ENCODE measurements at regions of chr2 and their contacts with region 1.

Region 1: GRCh38 chr2:63698825-63699548 is 110.2 kb downstream of the MDH1 start:
- DNase-seq: peak in 1 of 2 donors; percentile 66
- ATAC-seq: peak; percentile 90 to 97 (median 94)
- H3K4me3 ChIP-seq: no peak overlapping the region
- H3K27ac ChIP-seq: peak overlapping the region in 7 of 10 donors; percentile 23 to 81 (median 64)
- H3K4me1 ChIP-seq: peaks cover 0 to 17% (median 7%) of the 10 kb centered on the region in 9 donors
- H3K27me3 ChIP-seq: no peaks in the 10 kb centered on the region
- CTCF ChIP-seq: peak; percentile 16 to 72 (median 57)

Region 2: DNA sequence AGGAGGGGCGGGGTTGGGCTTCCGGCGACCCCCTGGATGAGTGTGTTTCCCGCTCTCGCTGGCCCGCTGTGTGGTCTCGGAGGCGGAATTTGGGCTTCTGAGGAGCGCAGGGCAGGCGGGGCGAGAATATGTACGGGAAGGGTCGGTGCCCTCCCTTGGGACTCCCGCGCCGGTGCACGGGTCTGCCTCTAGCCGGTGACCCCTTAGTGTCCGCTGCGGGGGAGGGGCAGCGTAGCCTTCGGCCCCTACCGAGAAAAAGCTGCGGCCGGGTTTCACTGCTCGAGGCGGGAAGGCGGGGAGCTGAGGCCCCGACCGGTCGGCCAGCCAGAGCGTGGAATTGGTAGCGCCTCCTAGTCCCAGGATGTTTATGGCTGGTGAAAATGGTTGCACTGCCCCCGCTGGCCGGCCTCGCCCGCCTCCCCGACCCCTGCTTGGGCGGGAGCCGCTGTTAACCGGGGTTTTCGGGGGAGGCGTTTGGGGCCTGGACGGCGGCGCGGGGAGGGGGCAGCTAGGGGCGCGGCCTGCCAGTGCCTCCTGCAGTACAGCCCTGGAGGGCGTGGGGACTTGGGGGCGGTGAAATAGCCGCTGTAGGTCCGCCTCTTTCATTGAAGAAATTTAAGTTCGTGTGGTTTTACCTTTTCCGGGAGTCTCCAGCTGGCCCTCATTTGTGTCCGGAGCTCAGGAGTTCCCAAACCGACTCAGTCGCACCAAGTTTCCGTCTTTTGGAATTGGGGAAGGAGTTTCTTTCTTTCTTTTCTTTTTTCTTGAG is 142.5 kb after region 1 on chr2 and contains the start of gene UGP2:
- intact Hi-C with region 1: loop called in 2 of 10 experiments (anchors 1 to 5 kb)
- DNase-seq: peak; percentile 90 to 91
- ATAC-seq: peak; percentile 86 to 94 (median 91)
- H3K4me3 ChIP-seq: peak within 1 kb of the TSS; percentile 75 to 97 (median 88)
- H3K27ac ChIP-seq: peak within 1 kb of the TSS; percentile 93 to 100 (median 98)
- H3K4me1 ChIP-seq: peaks cover 4 to 52% (median 35%) of the 10 kb centered on the region in 9 donors
- H3K27me3 ChIP-seq: no peaks in the 10 kb centered on the region
- CTCF ChIP-seq: peak in 7 of 9 donors; percentile 12 to 59 (median 21)
- total RNA-seq, gene UGP2: 250 to 457 (median 371) TPM

Region 3: DNA sequence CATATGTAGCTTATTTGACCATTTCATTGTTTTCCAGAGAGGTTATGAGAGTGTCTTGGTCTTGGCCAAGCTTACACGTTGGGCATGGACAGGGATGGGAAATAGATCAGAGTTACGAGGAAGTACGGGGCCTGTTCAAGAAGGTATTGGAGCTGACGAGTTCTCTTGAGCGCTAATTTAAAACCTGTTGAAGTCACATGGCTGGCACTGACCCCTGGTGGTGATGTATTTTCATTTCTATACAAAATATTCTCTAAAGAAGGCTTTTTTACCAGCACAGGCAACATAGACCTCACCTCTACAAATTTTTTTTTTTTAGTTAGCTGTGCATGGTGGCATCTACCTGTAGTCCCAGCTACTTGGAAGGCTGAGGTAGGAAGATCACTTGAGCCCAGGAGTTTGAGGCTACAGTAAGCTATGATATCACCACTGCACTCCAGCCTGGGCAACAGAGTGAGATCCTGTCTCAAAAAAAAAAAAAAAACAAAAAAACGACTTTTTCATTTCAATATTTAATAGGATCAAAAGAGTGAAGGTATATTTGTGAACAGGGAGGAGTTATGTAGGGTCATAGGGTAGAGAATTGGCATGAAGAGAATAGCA is 162.3 kb after region 1 on chr2:
- intact Hi-C with region 1: loop called in 4 of 10 experiments (anchors 5 kb)
- DNase-seq: peak in 1 of 2 donors; percentile 61
- ATAC-seq: peak in 7 of 8 donors; percentile 50 to 86 (median 66)
- H3K4me3 ChIP-seq: no peak overlapping the region
- H3K27ac ChIP-seq: peak overlapping the region in 6 of 10 donors; percentile 9 to 46 (median 16)
- H3K4me1 ChIP-seq: peaks cover 0 to 40% (median 28%) of the 10 kb centered on the region in 9 donors
- H3K27me3 ChIP-seq: no peaks in the 10 kb centered on the region
- CTCF ChIP-seq: peak; percentile 33 to 72 (median 61)

Region 4: GRCh38 chr2:63888490-63889402 is 189.8 kb after region 1 on chr2:
- intact Hi-C with region 1: loop called in 3 of 10 experiments (anchors 5 to 10 kb)
- DNase-seq: peak in 1 of 2 donors; percentile 8
- ATAC-seq: peak in 7 of 8 donors; percentile 49 to 82 (median 79)
- H3K4me3 ChIP-seq: no peak overlapping the region
- H3K27ac ChIP-seq: peak overlapping the region in 1 of 10 donors; percentile 11
- H3K4me1 ChIP-seq: peaks cover 0 to 25% (median 0%) of the 10 kb centered on the region in 9 donors
- H3K27me3 ChIP-seq: no peaks in the 10 kb centered on the region
- CTCF ChIP-seq: peak in 8 of 9 donors; percentile 41 to 77 (median 68)